CD14-positive monocyte (primary cell): ENCODE measurements at regions of chr4 and their contacts with region 1.

Region 1: DNA sequence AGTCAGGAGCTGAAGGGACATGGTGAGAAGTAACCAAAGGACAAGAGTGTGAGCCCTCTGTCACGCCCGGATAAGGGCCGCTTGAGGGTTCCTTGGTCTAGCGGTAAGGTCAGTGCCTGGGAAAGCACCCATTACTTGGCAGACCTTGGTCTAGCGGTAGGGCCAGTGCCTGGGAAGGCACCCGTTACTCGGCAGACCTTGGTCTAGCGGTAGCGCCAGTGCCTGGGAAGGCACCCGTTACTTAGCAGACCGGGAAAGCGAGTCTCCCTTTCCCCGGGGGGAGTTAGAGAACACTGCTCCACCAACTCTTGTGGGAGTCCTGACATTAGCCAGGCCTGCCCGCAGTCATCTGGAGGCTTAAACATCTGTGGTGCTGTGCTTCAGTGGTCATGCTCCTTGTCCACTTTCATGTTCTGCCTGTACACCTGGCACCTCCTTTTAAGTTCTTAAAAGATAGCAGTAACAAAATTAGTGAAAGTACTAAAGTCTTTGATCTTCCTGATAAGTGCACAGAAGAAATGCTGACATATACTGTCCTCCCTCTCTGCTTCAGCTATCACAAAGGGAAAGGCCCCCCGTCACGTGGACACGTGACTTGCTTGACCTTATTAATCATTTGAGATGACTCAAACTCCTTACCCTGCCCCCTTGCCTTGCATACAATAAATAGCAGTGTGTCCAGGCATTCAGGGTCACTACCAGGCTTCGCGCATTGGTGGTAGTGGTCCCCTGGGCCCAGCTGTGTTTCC is 9.3 kb upstream of the SEC24B start:
- DNase-seq: no peak
- H3K4me3 ChIP-seq: no peak overlapping the region
- H3K4me3 Mint-ChIP-seq: no peak overlapping the region
- H3K27ac ChIP-seq: no peak overlapping the region
- H3K27ac Mint-ChIP-seq: no peak overlapping the region
- H3K4me1 ChIP-seq: no peaks in the 10 kb centered on the region
- H3K4me1 Mint-ChIP-seq: peaks cover 3% of the 10 kb centered on the region
- H3K27me3 ChIP-seq: no peaks in the 10 kb centered on the region
- H3K27me3 Mint-ChIP-seq: peaks cover 0 to 2% (median 0%) of the 10 kb centered on the region in 3 donors
- CTCF ChIP-seq: no peak

Region 2: DNA sequence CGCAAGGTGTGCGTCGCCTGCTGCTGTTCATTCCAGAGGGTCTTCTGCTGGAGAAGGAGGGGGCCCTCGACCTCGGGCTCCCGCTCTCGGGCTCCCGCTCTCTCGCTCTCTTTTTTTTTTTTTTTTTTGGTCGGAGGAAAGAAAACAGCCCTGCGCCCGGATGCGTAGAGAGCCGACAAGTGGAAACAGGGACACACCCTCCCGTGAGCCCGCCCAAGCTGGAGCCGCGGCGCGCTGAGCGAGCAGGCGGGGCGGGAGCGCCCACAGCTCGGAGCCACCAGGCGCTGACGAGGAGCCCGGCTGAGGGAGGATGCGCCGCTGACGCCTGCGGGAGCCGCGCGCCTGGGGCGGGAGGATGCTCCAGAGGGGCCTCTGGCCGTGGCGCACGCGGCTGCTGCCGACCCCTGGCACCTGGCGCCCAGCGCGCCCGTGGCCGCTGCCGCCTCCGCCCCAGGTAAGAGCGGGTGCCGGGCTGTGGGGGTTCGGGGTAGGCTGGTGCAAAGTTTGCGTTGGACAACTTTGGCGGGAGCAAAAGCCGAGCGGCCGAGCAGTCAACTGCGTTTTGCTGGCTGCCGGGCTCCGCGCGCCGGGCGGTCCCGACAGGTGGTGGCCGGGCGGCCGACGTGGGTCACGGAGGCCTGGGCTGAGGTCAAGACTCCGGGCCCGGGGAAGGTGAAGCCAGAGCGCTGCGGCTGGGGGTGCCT is 135.9 kb after region 1 on chr4 and contains the start of gene MCUB:
- intact Hi-C with region 1: no loop called
- DNase-seq: peak; percentile 75 to 87 (median 79)
- H3K4me3 ChIP-seq: peak within 1 kb of the TSS; percentile 63 to 96 (median 89)
- H3K4me3 Mint-ChIP-seq: peak within 1 kb of the TSS; percentile 91 to 97
- H3K27ac ChIP-seq: peak within 1 kb of the TSS; percentile 93 to 97
- H3K27ac Mint-ChIP-seq: peak within 1 kb of the TSS; percentile 96 to 99 (median 98)
- H3K4me1 ChIP-seq: peaks cover 23 to 35% of the 10 kb centered on the region in 2 donors
- H3K4me1 Mint-ChIP-seq: peaks cover 52% of the 10 kb centered on the region
- H3K27me3 ChIP-seq: no peaks in the 10 kb centered on the region
- H3K27me3 Mint-ChIP-seq: peaks cover 3 to 6% (median 4%) of the 10 kb centered on the region in 3 donors
- CTCF ChIP-seq: no peak
- polyA plus RNA-seq, gene MCUB: 117 to 125 (median 123) TPM

Region 3: DNA sequence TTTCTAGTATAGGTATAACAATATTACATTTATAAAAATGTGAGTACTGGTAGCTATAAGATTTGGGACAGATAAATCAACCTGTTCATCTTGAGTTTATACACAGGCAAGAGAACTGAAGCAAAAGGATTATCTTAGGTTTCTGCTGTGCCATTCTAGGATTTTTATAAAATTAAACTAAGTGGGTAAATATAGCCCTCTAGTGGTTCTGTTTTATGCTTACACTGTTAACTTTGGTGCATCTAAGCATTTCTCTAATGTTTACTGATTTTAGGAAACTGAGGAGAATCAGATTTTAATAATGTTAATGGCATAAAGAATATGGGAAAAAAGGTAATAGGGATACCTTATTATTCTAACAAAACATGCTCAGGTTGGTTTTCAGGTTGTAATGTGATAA is 402.5 kb after region 1 on chr4:
- intact Hi-C with region 1: loop called in 1 of 2 experiments (anchors 2 kb)
- DNase-seq: peak in 1 of 3 donors; percentile 22
- H3K4me3 ChIP-seq: no peak overlapping the region
- H3K4me3 Mint-ChIP-seq: no peak overlapping the region
- H3K27ac ChIP-seq: no peak overlapping the region
- H3K27ac Mint-ChIP-seq: no peak overlapping the region
- H3K4me1 ChIP-seq: no peaks in the 10 kb centered on the region
- H3K4me1 Mint-ChIP-seq: no peaks in the 10 kb centered on the region
- H3K27me3 ChIP-seq: no peaks in the 10 kb centered on the region
- H3K27me3 Mint-ChIP-seq: no peaks in the 10 kb centered on the region
- CTCF ChIP-seq: peak; percentile 68

Region 4: GRCh38 chr4:109977854-109978501 is 553.7 kb after region 1 on chr4:
- intact Hi-C with region 1: loop called in 1 of 2 experiments (anchors 10 kb)
- DNase-seq: peak in 2 of 3 donors; percentile 24 to 44
- H3K4me3 ChIP-seq: no peak overlapping the region
- H3K4me3 Mint-ChIP-seq: no peak overlapping the region
- H3K27ac ChIP-seq: no peak overlapping the region
- H3K27ac Mint-ChIP-seq: no peak overlapping the region
- H3K4me1 ChIP-seq: peaks cover 13 to 15% of the 10 kb centered on the region in 2 donors
- H3K4me1 Mint-ChIP-seq: peaks cover 13% of the 10 kb centered on the region
- H3K27me3 ChIP-seq: no peaks in the 10 kb centered on the region
- H3K27me3 Mint-ChIP-seq: peaks cover 0 to 4% (median 3%) of the 10 kb centered on the region in 3 donors
- CTCF ChIP-seq: peak; percentile 70